ENCODE measurements at regions of chr1 and their contacts with region 1.

Region 1: DNA sequence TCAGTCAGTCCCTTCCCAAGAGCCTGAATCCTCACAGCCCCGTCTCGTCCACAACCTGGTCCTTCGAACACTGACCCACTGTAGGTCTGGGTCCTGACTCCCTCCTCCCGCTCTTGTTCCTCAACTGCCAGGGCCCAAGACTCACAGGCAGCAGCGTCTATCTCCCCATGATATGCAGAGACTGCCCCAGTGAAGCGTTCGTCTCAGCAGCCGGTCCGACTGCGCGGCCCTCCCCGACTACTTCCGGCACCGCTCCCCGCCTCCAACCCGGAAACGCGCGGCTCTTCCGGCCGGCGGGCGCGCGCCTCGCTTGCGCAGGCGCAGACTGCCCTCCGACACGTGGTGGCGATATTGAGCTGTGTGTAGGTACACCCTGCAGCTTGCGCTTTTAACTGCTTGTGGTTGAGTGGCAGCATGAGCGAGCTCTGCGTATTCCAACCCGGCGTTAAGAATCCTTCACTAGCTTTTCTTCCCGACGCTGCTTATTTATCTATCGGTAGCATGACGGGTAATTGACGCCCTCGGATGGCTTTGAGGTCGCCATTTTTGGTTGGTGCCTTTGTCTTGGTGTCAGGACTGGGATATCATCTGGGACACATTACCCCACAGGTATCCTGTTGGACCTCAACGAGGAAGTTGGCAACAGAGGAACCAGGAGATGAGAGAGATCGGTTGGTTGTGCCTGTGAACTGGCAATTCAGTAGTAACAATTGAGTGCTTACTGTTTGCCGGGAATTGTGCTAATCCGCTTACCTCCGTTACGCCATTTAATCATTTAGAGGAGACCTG is at the start of gene TAF12:
- DNase-seq: peak; percentile 67 to 95
- H3K4me3 ChIP-seq: peak within 1 kb of the TSS; percentile 67 to 76
- H3K27ac ChIP-seq: peak within 1 kb of the TSS; percentile 92
- H3K4me1 ChIP-seq: peaks cover 3 to 25% of the 10 kb centered on the region in 2 donors
- H3K27me3 ChIP-seq: no peaks in the 10 kb centered on the region
- CTCF ChIP-seq: peak; percentile 1 to 50 (median 32)
- total RNA-seq, gene TAF12: 32.2 TPM

Region 2: DNA sequence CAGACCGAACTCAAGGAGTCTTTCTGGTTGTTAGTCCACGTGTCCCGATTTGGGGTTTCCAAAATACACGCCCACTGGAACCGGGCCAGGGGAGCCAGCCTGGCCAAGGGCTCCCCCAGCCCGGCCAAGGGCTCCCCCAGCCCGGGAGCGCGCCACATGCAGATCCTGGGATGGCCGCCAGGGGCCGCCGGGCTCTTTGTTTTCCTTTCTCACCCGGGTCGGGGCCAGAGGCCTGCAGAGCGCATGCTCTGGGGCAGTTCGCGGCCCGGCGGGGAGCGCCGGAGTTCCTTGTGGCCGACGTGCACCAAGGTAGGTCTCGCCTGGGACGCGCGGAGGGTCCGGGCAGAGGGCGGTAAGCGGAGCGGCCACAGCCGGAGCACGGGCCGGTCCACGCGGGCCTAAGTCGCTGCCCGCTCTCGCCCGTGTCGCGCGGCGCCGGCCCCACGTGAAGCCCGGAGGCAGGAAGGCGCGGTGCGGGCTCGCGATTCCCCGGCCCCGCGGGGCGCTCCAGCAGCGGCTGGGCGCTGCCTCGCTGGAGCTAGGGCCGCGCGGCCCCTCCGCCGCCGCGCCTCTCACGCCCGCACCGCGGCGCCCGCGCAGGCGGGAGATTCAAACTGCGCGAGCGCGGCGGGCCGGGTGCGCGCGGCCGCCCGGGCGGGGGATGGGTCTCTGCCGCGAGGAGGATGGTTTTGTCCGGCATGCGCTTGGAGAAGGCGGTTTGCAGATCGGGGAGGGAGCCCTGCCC is 124.9 kb before region 1 on chr1:
- intact Hi-C with region 1: loop called (anchors 2 kb)
- DNase-seq: peak; percentile 50 to 93
- H3K4me3 ChIP-seq: peak overlapping the region; percentile 69 to 97
- H3K27ac ChIP-seq: peak overlapping the region; percentile 43 to 87
- H3K4me1 ChIP-seq: peaks cover 9 to 13% of the 10 kb centered on the region in 2 donors
- H3K27me3 ChIP-seq: no peaks in the 10 kb centered on the region
- CTCF ChIP-seq: peak; percentile 97 to 100 (median 99)

Region 3: GRCh38 chr1:28581536-28582247 is 61.3 kb before region 1 on chr1:
- intact Hi-C with region 1: loop called (anchors 2 kb)
- DNase-seq: peak; percentile 85 to 97
- H3K4me3 ChIP-seq: peak overlapping the region; percentile 77 to 86
- H3K27ac ChIP-seq: peak overlapping the region; percentile 91 to 92
- H3K4me1 ChIP-seq: peaks cover 8 to 14% of the 10 kb centered on the region in 2 donors
- H3K27me3 ChIP-seq: no peaks in the 10 kb centered on the region
- CTCF ChIP-seq: peak in 1 of 3 experiments; percentile 35

Region 4: GRCh38 chr1:28736450-28737306 is 93.6 kb after region 1 on chr1 and contains the start of gene YTHDF2:
- intact Hi-C with region 1: loop called (anchors 1 kb)
- DNase-seq: peak; percentile 86 to 99
- H3K4me3 ChIP-seq: peak within 1 kb of the TSS; percentile 96 to 97
- H3K27ac ChIP-seq: peak within 1 kb of the TSS; percentile 93 to 94
- H3K4me1 ChIP-seq: peaks cover 5 to 19% of the 10 kb centered on the region in 2 donors
- H3K27me3 ChIP-seq: no peaks in the 10 kb centered on the region
- CTCF ChIP-seq: peak; percentile 93 to 95 (median 95)
- total RNA-seq, gene YTHDF2: 50.6 TPM

Region 5: GRCh38 chr1:28855469-28855951 is 212.5 kb after region 1 on chr1:
- intact Hi-C with region 1: no loop called
- DNase-seq: no peak
- H3K4me3 ChIP-seq: no peak overlapping the region
- H3K27ac ChIP-seq: no peak overlapping the region
- H3K4me1 ChIP-seq: no peaks in the 10 kb centered on the region
- H3K27me3 ChIP-seq: no peaks in the 10 kb centered on the region
- CTCF ChIP-seq: no peak

Region 6: GRCh38 chr1:29181413-29182225 is 538.6 kb after region 1 on chr1 and contains the start of gene SRSF4:
- intact Hi-C with region 1: loop called (anchors 2 kb)
- DNase-seq: peak; percentile 92 to 99
- H3K4me3 ChIP-seq: peak within 1 kb of the TSS; percentile 95 to 99
- H3K27ac ChIP-seq: peak within 1 kb of the TSS; percentile 100
- H3K4me1 ChIP-seq: peaks cover 18 to 30% of the 10 kb centered on the region in 2 donors
- H3K27me3 ChIP-seq: no peaks in the 10 kb centered on the region
- CTCF ChIP-seq: peak; percentile 73 to 79 (median 75)
- total RNA-seq, gene SRSF4: 49.1 TPM

Measured in ascending aorta (tissue), 2 donors.